ENCODE measurements at regions of chr1 and their contacts with region 1.

Region 1: GRCh38 chr1:26284597-26285360 is 4.9 kb downstream of the SH3BGRL3 start:
- DNase-seq: peak; percentile 83
- H3K4me3 ChIP-seq: no peak overlapping the region
- H3K27ac ChIP-seq: peak overlapping the region; percentile 98
- H3K4me1 ChIP-seq: peaks cover 62% of the 10 kb centered on the region
- CTCF ChIP-seq: peak; percentile 97

Region 2: GRCh38 chr1:26110731-26111529 is 173.8 kb before region 1 on chr1:
- CTCF ChIA-PET with region 1: no interaction called
- POLR2A ChIA-PET with region 1: no interaction called
- intact Hi-C with region 1: no loop called
- DNase-seq: peak; percentile 88
- H3K4me3 ChIP-seq: peak overlapping the region; percentile 87
- H3K27ac ChIP-seq: peak overlapping the region; percentile 61
- H3K4me1 ChIP-seq: peaks cover 36% of the 10 kb centered on the region
- CTCF ChIP-seq: no peak

Region 3: GRCh38 chr1:26233903-26234643 is 50.7 kb before region 1 on chr1 and contains the start of gene CEP85:
- CTCF ChIA-PET with region 1: no interaction called
- POLR2A ChIA-PET with region 1: no interaction called
- intact Hi-C with region 1: no loop called
- DNase-seq: peak; percentile 98
- H3K4me3 ChIP-seq: peak within 1 kb of the TSS; percentile 86
- H3K27ac ChIP-seq: peak within 1 kb of the TSS; percentile 67
- H3K4me1 ChIP-seq: peaks cover 34% of the 10 kb centered on the region
- CTCF ChIP-seq: peak; percentile 87
- total RNA-seq, gene CEP85: 46.4 and 55.2 TPM in 2 replicates

Region 4: GRCh38 chr1:26300586-26301275 is 16.0 kb after region 1 on chr1:
- CTCF ChIA-PET with region 1: interaction called, 3 read pairs
- POLR2A ChIA-PET with region 1: interaction called, 106 read pairs
- intact Hi-C with region 1: no loop called
- DNase-seq: no peak
- H3K4me3 ChIP-seq: no peak overlapping the region
- H3K27ac ChIP-seq: peak overlapping the region; percentile 72
- H3K4me1 ChIP-seq: peaks cover 69% of the 10 kb centered on the region
- CTCF ChIP-seq: no peak

Region 5: DNA sequence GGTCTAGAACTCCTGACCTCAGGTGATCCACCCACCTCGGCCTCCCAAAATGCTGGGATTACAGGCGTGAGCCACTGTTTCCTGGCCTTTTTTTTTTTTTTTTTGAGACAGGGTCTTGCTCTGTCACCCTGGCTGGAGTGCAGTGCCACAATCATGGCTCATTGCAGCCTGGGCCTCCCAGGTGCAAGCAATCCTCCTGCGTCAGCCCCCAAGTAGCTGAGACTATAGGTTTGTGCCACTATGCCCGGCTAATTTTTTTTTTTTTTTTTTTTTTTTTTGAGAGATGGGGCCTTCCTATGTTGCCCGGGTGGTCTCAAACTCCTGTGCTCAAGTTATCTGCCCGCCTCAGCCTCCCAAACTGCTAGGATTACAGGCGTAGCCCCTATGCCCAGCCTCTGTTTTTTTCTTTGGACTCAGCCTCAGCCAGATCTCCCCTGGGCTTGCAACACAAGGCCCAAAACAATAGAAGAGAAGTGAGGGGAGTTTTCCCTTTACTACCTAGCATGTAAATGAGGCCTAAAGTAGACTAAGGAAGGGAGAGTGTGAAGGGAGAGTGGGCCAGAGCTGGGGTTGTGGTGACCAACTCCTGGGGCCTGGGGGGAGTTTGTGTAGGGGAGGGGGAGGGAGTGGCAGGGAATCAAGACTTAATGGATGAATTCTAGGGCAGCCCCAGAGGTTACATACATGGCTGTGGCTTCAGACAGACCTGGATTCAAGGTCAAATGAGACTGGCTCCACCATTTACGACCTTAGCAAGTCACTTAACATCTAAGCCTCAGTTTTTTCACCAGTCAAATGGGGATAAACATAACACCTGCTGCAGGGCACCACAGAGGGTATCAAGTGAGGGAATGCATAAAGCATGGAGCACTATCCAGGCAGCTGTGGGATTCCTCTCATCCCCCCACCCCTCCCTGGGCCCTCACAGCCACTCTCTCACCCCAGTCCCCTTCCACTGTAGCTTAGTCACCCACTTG is 31.4 kb after region 1 on chr1:
- CTCF ChIA-PET with region 1: interaction called, 37 read pairs
- POLR2A ChIA-PET with region 1: interaction called, 273 read pairs
- intact Hi-C with region 1: loop called (anchors 1 kb)
- DNase-seq: peak; percentile 57
- H3K4me3 ChIP-seq: peak overlapping the region; percentile 93
- H3K27ac ChIP-seq: peak overlapping the region; percentile 91
- H3K4me1 ChIP-seq: peaks cover 71% of the 10 kb centered on the region
- CTCF ChIP-seq: no peak

Region 6: DNA sequence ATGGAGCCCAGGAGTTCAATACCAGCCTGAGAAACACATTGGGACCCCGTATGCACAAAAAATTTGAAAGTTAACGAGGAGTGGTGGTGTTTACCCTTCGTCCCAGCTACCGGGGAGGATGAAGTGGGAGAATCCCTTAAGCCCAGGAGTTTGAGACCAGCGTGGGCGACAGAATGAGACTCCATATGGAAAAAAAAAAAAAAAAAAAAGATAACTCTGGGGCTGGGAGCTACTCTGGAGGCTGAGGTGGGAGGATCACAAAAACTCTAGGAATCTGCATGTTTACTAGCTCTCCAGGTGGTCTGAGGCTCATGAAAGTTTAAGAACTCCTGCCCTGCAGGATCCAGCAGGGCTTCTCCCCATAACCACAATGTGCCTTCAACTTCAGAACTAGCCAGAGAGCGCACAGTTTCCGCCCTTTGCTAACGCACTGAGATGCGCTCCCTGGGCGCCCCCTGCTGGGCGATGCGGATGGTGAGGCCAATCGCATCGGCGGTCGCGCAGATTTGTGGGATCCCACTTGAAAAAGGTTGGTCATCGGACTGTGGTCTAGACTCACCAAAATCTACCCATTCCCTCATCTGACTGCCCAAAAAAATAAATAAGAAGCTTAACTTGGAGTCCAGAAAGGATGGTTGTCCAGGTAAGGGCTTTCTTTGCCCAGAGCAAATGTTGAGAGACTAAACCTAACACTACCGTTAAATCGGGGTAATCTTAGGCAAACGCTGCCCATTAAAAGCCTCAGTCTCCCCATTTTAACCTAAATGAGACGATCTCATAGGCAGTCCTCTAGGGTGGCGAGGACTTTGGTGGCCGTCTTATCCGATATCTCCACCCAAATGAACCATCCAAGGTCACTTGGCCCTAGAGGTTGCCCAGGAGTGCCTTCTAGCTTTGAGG is 79.0 kb after region 1 on chr1:
- CTCF ChIA-PET with region 1: interaction called, 7 read pairs
- POLR2A ChIA-PET with region 1: interaction called, 4 read pairs
- intact Hi-C with region 1: loop called (anchors 1 kb)
- DNase-seq: peak; percentile 92
- H3K4me3 ChIP-seq: no peak overlapping the region
- H3K27ac ChIP-seq: no peak overlapping the region
- H3K4me1 ChIP-seq: peaks cover 9% of the 10 kb centered on the region
- CTCF ChIP-seq: peak; percentile 99

Region 7: GRCh38 chr1:26472901-26473845 is 188.4 kb after region 1 on chr1:
- CTCF ChIA-PET with region 1: no interaction called
- POLR2A ChIA-PET with region 1: no interaction called
- intact Hi-C with region 1: loop called (anchors 5 kb)
- DNase-seq: peak; percentile 96
- H3K4me3 ChIP-seq: peak overlapping the region; percentile 96
- H3K27ac ChIP-seq: peak overlapping the region; percentile 95
- H3K4me1 ChIP-seq: peaks cover 61% of the 10 kb centered on the region
- CTCF ChIP-seq: no peak